ENCODE measurements at regions of chr9 and their contacts with region 1.

Region 1: GRCh38 chr9:130053504-130054324 is at the start of gene GPR107:
- DNase-seq: peak; percentile 91
- ATAC-seq: peak; percentile 90
- H3K4me3 Mint-ChIP-seq: peak within 1 kb of the TSS; percentile 94
- H3K27ac Mint-ChIP-seq: peak within 1 kb of the TSS; percentile 86
- H3K4me1 Mint-ChIP-seq: peaks cover 30% of the 10 kb centered on the region
- H3K27me3 Mint-ChIP-seq: no peaks in the 10 kb centered on the region
- total RNA-seq, gene GPR107: 17.7 to 19.7 TPM

Region 2: GRCh38 chr9:129823935-129824601 is 229.6 kb before region 1 on chr9 and contains the start of gene TOR1A:
- CTCF ChIA-PET with region 1: no interaction called
- POLR2A ChIA-PET with region 1: no interaction called
- intact Hi-C with region 1: loop called in 1 of 2 experiments (anchors 1 kb)
- DNase-seq: peak; percentile 97
- ATAC-seq: peak; percentile 93
- H3K4me3 Mint-ChIP-seq: peak within 1 kb of the TSS; percentile 82
- H3K27ac Mint-ChIP-seq: peak within 1 kb of the TSS; percentile 63
- H3K4me1 Mint-ChIP-seq: peaks cover 14% of the 10 kb centered on the region
- H3K27me3 Mint-ChIP-seq: no peaks in the 10 kb centered on the region
- total RNA-seq, gene TOR1A: 34.9 to 39.7 TPM

Region 3: GRCh38 chr9:130069048-130069447 is 15.3 kb after region 1 on chr9:
- CTCF ChIA-PET with region 1: interaction called, 26 read pairs
- POLR2A ChIA-PET with region 1: interaction called, 3 read pairs
- intact Hi-C with region 1: no loop called
- DNase-seq: no peak
- ATAC-seq: peak; percentile 24
- H3K4me3 Mint-ChIP-seq: no peak overlapping the region
- H3K27ac Mint-ChIP-seq: no peak overlapping the region
- H3K4me1 Mint-ChIP-seq: peaks cover 33% of the 10 kb centered on the region
- H3K27me3 Mint-ChIP-seq: no peaks in the 10 kb centered on the region

Measured in activated CD4-positive, alpha-beta T cell treated with anti-CD3 and anti-CD28 coated beads for 36 hours (primary cell).